Left cardiac atrium (tissue), 4 donors: ENCODE measurements at regions of chr17 and their contacts with region 1.

Region 1: DNA sequence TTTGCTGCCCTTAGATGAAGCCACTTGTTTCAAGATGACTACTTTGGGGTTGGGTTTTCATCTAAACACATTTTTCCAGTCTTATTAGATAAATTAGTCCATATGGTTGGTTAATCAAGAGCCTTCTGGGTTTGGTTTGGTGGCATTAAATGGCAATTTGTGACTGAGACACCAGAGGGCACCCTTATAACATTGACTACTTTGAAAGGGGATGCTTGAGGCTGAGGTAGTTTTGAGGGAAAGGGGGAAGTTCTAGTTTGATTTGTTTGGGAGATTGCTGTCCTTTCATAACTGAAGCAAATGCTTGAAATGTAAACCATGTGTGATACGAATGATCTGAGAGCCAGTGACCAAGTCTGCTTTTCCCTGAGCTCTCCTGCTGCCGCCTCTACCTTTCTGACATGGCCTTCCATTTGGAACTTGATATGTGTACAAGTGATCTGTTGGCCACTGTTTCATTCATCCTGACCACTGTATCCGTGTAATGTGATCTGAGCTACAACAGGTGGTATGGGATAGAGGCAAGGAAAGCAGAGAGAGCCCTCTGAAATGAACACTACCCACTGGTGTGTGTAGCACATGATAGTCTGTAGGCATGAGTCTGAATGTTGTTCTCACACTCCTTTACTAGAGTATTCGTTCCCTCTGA is 5.8 kb upstream of the RARA start:
- DNase-seq: no peak
- ATAC-seq: peak; percentile 50 to 53

Region 2: GRCh38 chr17:39335704-39336223 is 967.4 kb before region 1 on chr17:
- intact Hi-C with region 1: no loop called
- DNase-seq: no peak
- ATAC-seq: peak in 1 of 2 donors; percentile 59

Region 3: GRCh38 chr17:40113110-40113906 is 189.8 kb before region 1 on chr17:
- intact Hi-C with region 1: no loop called
- DNase-seq: peak; percentile 93
- ATAC-seq: peak; percentile 75 to 80

Region 4: DNA sequence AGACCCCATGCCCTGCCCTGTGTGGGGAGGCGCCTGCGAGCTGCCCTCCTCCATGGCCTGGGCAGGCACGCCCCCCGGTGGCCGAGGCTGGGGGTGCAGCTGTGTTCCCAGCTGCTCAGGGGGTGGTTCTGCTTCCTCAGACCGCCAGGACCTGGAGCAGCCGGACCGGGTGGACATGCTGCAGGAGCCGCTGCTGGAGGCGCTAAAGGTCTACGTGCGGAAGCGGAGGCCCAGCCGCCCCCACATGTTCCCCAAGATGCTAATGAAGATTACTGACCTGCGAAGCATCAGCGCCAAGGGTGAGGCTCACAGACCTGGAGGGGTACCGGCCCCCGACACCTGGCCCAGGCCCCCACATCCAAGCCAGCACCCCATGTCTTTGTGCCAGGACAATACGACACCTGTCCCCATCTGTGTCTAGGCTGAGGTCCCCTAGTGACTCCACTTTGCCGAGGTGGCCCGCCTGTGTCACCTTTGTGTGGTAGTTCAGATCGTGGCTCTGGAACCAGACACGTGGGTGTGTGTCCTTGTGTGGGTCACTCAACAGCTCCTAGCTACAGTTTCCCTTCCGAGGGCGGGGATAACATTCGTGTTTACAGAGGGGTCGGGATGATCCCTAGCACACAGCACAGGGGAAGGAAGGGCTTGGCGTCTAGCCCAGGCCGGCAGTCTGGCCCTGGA is 52.1 kb after region 1 on chr17:
- intact Hi-C with region 1: loop called (anchors 2 kb)
- DNase-seq: peak; percentile 78
- ATAC-seq: peak; percentile 63 to 73

Region 5: DNA sequence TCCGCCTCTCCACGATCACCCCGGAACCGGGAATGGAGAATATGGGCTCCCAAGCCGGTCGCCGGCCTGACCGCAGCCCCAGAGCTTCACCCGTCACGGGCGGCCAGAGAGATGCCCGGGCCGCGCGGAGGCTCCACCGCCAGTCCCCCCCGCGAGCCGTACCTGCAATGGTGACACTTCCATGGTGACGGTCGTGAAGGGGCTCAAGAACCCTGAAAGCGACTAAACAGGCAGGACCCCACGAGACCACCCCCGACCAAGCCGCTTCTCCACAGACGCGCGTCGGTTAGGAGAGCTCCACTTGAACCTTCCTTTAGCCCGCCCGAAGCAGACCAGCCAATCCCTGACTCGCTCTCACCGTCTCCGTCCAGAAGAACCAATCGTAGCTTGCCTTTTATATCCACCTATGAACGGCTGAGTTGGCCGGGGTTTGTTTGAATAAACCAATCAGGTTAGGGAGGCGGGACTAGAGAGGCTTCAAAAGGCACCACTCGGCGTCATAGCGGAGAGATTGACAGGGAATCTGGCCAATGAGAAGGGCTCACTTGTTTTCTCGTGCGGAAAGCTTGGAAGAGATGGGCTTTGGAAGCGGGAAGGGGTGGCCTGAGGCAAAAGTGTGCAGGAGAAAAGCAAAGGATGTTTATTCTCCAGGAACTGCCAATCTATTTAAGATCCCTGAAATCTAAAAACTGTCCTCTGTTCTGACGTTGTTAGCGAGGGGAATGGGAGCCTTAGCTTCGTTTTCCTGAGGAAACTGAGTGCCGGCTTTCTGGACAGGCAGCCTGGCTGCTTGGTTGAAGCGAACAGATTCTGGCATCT is 114.7 kb after region 1 on chr17 and contains the start of gene TOP2A:
- intact Hi-C with region 1: loop called (anchors 5 to 10 kb)
- DNase-seq: peak; percentile 95
- ATAC-seq: peak; percentile 100
- total RNA-seq, gene TOP2A: 0.47 to 4.2 TPM

Region 6: GRCh38 chr17:40433551-40434415 is 130.7 kb after region 1 on chr17:
- intact Hi-C with region 1: no loop called
- DNase-seq: no peak
- ATAC-seq: peak; percentile 14 to 52

Region 7: GRCh38 chr17:40922239-40922638 is 619.1 kb after region 1 on chr17:
- intact Hi-C with region 1: no loop called
- DNase-seq: peak; percentile 52
- ATAC-seq: peak in 1 of 2 donors; percentile 94